ENCODE measurements at regions of chr2 and their contacts with region 1.

Region 1: DNA sequence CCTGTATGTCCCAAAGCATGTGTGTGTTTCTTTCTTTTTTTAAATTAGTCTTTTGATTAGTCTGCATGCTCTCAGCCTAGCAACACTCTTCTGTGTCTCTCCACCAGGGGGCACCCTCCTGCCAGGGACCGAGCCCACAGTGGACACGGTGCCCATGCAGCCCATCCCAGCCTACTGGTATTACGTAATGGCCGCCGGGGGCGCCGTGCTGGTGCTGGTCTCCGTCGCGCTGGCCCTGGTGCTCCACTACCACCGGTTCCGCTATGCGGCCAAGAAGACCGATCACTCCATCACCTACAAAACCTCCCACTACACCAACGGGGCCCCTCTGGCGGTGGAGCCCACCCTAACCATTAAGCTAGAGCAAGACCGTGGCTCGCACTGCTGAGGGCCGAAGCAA is 93.8 kb downstream of the NRP2 start:
- DNase-seq: peak; percentile 62
- ATAC-seq: peak; percentile 98
- H3K4me3 ChIP-seq: no peak overlapping the region
- H3K27ac ChIP-seq: no peak overlapping the region
- H3K4me1 ChIP-seq: no peaks in the 10 kb centered on the region
- H3K27me3 ChIP-seq: peaks cover 0 to 6% of the 10 kb centered on the region in 2 experiments; a peak in 2 of 5 replicates
- CTCF ChIP-seq: peak; percentile 93
- EP300 ChIP-seq: peak in 1 of 2 experiments; percentile 28; a peak in 1 of 4 replicates
- POLR2A ChIP-seq: no peak
- RAD21 ChIP-seq: peak; percentile 96

Region 2: DNA sequence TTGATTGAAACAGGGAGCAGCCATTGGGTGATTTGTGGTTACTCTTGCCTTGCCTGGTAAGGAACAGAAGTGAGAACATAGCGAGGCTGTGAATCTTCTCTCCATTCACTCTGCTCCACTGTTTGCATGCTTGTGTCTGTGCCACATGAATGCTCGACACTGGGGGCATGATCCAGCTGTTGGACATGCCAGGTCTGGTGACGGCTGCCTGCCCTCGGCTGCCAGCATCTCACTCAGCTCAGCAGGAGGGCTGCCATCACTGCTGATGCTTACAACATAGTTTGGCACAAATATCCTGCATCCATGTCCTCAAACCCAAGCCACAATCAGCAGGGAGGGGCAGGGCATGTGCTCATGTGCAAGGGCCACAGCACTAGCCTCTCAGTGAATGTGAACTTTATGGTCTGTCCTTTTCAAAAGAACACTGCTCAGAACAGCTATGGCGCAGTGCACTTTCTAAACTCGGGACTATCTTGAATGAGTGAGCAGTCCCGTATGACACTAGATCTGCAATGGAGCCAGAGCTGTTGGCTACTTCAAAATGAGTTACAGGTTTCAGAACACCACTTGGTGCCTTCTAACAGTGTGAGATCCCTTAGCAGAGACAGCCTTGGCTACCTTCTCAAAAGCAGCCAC is 32.5 kb after region 1 on chr2:
- CTCF ChIA-PET with region 1: interaction called, 38 read pairs
- POLR2A ChIA-PET with region 1: no interaction called
- in situ Hi-C with region 1: loop called (anchors 5 kb)
- intact Hi-C with region 1: loop called (anchors 1 kb)
- DNase-seq: no peak
- ATAC-seq: no peak
- H3K4me3 ChIP-seq: no peak overlapping the region
- H3K27ac ChIP-seq: no peak overlapping the region
- H3K4me1 ChIP-seq: peaks cover 17% of the 10 kb centered on the region
- H3K27me3 ChIP-seq: peaks cover 3 to 34% of the 10 kb centered on the region in 2 experiments; a peak in 4 of 5 replicates
- CTCF ChIP-seq: no peak
- EP300 ChIP-seq: no peak
- POLR2A ChIP-seq: no peak
- RAD21 ChIP-seq: no peak

Region 3: DNA sequence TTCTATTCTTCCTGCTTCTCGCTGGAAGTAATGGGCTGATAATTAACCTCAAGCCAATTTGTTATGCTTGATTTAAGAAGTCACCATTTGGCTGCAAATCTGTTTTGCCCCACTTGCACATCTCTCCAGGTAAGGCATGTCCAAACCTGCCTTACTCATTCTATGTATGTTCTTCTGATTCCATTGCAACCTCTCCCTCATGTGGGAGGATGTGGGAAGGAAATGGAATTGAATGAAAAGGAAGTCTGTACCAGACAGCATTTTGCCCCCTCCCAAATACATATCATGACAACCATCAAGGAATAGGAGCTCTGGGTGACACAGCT is 37.9 kb after region 1 on chr2:
- CTCF ChIA-PET with region 1: interaction called, 38 read pairs
- POLR2A ChIA-PET with region 1: no interaction called
- in situ Hi-C with region 1: loop called (anchors 5 kb)
- intact Hi-C with region 1: loop called (anchors 1 kb)
- DNase-seq: no peak
- ATAC-seq: no peak
- H3K4me3 ChIP-seq: no peak overlapping the region
- H3K27ac ChIP-seq: no peak overlapping the region
- H3K4me1 ChIP-seq: no peaks in the 10 kb centered on the region
- H3K27me3 ChIP-seq: 0 out of 5 replicates have a peak, but pooled peaks cover 0 to 1% of the 10 kb centered on the region in 2 experiments
- CTCF ChIP-seq: no peak
- EP300 ChIP-seq: no peak
- POLR2A ChIP-seq: no peak
- RAD21 ChIP-seq: no peak

Region 4: GRCh38 chr2:205885492-205886099 is 109.5 kb after region 1 on chr2:
- CTCF ChIA-PET with region 1: interaction called, 26 read pairs
- POLR2A ChIA-PET with region 1: no interaction called
- in situ Hi-C with region 1: loop called (anchors 5 kb)
- intact Hi-C with region 1: loop called (anchors 1 kb)
- DNase-seq: peak; percentile 65
- ATAC-seq: peak; percentile 99
- H3K4me3 ChIP-seq: no peak overlapping the region
- H3K27ac ChIP-seq: no peak overlapping the region
- H3K4me1 ChIP-seq: no peaks in the 10 kb centered on the region
- H3K27me3 ChIP-seq: peaks cover 0 to 3% of the 10 kb centered on the region in 2 experiments; a peak in 1 of 5 replicates
- CTCF ChIP-seq: peak; percentile 97
- EP300 ChIP-seq: no peak
- POLR2A ChIP-seq: no peak
- RAD21 ChIP-seq: peak; percentile 97

Region 5: DNA sequence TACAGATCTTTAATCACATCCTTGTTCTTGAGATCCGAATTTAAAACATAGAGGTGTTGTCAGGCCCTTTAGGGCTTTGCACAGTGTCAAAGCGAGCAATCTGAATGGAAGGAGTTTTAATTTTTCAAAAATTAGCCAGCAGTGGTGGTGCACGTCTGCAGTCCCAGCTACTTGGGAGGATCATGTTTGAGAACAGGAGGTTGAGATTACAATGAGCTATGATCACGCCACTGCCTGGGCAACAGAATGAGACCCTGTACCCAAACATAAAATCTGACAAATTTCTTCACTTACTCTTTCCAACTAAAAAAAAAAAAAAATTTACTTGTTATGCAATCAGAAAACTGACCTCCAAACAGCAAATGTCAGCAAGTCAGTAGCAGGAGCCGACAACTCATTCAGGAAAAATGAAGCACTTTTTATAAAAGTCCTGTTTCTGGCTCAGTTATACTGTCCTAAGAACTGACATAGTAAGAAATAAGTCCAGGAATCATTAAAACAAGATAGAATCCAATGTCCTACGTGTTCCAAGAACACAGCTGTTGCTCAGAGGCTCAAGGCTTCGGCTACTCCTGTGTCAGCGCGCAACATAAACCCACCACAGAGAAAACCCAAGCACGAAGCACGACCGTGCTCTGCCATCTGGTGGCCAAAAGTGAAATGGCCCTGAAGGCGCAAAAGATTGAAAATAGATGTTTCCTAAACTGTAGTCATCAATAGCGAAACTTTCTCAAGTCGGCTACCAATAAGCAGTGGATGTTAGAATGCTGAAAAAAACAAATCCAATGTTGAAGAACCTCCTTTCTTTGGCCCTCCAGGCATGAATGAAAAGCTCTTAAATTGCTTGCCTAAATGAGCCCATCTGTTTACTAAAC is 171.7 kb after region 1 on chr2:
- CTCF ChIA-PET with region 1: interaction called, 12 read pairs
- POLR2A ChIA-PET with region 1: no interaction called
- in situ Hi-C with region 1: no loop called
- intact Hi-C with region 1: no loop called
- DNase-seq: peak; percentile 68
- ATAC-seq: peak; percentile 71
- H3K4me3 ChIP-seq: peak overlapping the region; percentile 14 to 43 (median 29); a peak in 4 of 6 replicates
- H3K27ac ChIP-seq: no peak overlapping the region
- H3K4me1 ChIP-seq: peaks cover 77% of the 10 kb centered on the region
- H3K27me3 ChIP-seq: 0 out of 5 replicates have a peak, but pooled peaks cover 0 to 2% of the 10 kb centered on the region in 2 experiments
- CTCF ChIP-seq: peak; percentile 97
- EP300 ChIP-seq: peak in 1 of 2 experiments; percentile 27; a peak in 1 of 4 replicates
- POLR2A ChIP-seq: no peak
- RAD21 ChIP-seq: peak; percentile 92